Naive thymus-derived CD8-positive, alpha-beta T cell (primary cell): ENCODE measurements at regions of chr3 and their contacts with region 1.

Region 1: GRCh38 chr3:30667280-30667651 is 60.9 kb downstream of the TGFBR2 start:
- DNase-seq: peak in 7 of 10 donors; percentile 37 to 67 (median 48)
- ATAC-seq: peak; percentile 37 to 57
- H3K4me3 Mint-ChIP-seq: peak overlapping the region; percentile 46 to 73 (median 64)
- H3K27ac Mint-ChIP-seq: peak overlapping the region; percentile 65 to 100 (median 90)
- H3K4me1 Mint-ChIP-seq: peaks cover 53 to 99% (median 95%) of the 10 kb centered on the region in 4 donors
- H3K27me3 Mint-ChIP-seq: no peaks in the 10 kb centered on the region

Region 2: GRCh38 chr3:30628901-30629590 is 38.2 kb before region 1 on chr3:
- POLR2A ChIA-PET with region 1: interaction called, 24 read pairs
- DNase-seq: peak in 1 of 10 donors; percentile 48
- ATAC-seq: peak; percentile 7 to 22
- H3K4me3 Mint-ChIP-seq: peak overlapping the region; percentile 38 to 82 (median 76)
- H3K27ac Mint-ChIP-seq: peak overlapping the region; percentile 91 to 100 (median 96)
- H3K4me1 Mint-ChIP-seq: peaks cover 46 to 99% (median 87%) of the 10 kb centered on the region in 4 donors
- H3K27me3 Mint-ChIP-seq: no peaks in the 10 kb centered on the region

Region 3: GRCh38 chr3:30644593-30645012 is 22.7 kb before region 1 on chr3:
- POLR2A ChIA-PET with region 1: interaction called, 36 read pairs
- DNase-seq: peak in 8 of 10 donors; percentile 47 to 75 (median 65)
- ATAC-seq: peak; percentile 72 to 76
- H3K4me3 Mint-ChIP-seq: peak overlapping the region; percentile 60 to 87 (median 80)
- H3K27ac Mint-ChIP-seq: peak overlapping the region; percentile 91 to 100 (median 96)
- H3K4me1 Mint-ChIP-seq: peaks cover 52 to 98% (median 89%) of the 10 kb centered on the region in 4 donors
- H3K27me3 Mint-ChIP-seq: no peaks in the 10 kb centered on the region

Region 4: GRCh38 chr3:30681643-30682211 is 14.5 kb after region 1 on chr3:
- POLR2A ChIA-PET with region 1: interaction called, 26 read pairs
- DNase-seq: no peak
- ATAC-seq: peak; percentile 52 to 66
- H3K4me3 Mint-ChIP-seq: peak overlapping the region; percentile 13 to 94 (median 68)
- H3K27ac Mint-ChIP-seq: peak overlapping the region; percentile 75 to 100 (median 91)
- H3K4me1 Mint-ChIP-seq: peaks cover 56 to 98% (median 96%) of the 10 kb centered on the region in 4 donors
- H3K27me3 Mint-ChIP-seq: no peaks in the 10 kb centered on the region

Region 5: DNA sequence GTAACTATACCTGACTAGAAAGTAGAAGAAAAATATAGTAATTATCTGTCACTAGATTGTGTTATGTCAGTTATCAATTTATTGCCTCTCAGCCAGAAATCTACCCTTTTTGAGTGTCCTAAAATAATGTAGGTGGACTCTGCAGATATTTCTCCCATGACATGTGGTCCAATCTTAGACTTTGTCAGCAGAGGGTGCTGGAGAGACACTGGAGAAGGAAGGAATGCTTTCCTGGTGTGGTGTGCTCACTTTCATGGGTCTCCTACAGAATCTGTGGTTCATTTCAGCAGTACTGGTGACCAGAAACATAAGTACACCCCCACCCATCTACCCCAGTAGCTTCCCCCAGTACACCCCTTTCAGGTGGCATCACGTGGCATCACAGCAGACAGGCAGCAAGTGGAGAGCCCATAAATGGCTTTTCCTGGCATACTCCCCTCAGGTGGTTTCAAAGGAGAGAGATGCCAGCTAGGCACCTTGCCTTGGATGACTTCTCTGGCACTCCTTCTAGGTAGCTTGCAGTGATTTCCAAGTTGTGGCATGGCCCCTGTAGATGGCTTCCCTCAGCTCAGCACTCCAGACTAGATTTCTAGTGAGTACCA is 112.5 kb after region 1 on chr3:
- POLR2A ChIA-PET with region 1: no interaction called
- DNase-seq: no peak
- ATAC-seq: no peak
- H3K4me3 Mint-ChIP-seq: no peak overlapping the region
- H3K27ac Mint-ChIP-seq: no peak overlapping the region
- H3K4me1 Mint-ChIP-seq: no peaks in the 10 kb centered on the region
- H3K27me3 Mint-ChIP-seq: peaks cover 0 to 19% (median 2%) of the 10 kb centered on the region in 5 donors